ENCODE measurements at regions of chr4 and their contacts with region 1.

Region 1: DNA sequence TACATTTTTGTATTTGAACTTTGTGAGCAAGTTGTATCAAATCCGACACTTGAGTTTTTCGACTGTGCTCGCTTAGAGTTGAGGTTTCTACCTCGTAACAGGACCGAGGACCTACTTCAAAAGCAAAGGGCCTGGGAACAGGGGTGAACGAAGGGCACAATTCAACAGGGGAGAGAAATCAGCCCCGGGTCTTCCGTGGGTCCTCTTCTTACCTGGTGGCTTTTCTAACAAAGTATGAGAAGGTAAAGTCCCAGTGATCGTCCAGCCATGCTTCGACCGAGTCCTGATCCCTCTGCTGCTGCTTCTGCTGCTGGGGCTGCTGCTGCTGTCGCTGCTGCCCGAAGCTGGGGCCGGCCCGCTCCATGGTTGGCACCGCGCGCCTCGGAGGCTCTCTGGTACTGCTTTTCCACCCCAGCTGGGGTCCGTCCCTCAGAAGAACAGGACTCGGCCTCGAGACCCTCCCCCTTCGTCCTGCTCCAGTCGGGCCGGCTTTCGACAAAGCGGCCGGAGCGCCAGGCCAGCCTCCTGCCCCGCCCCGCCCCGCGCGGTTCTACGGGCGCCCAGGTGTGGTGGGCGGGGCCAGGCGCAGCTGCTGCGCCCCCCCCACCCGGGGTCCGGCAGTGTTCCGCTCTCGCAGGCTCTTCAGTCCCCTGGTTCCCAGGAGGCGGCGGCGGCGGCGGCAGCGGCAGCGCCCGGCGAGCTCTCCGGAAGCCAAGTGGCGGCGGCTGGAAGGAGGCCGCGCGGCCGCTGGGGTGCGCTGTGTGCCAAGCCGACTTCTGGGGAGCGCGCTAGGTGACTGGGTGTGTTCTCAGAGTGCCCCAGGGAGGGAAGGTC is at the start of gene PDE5A:
- DNase-seq: peak; percentile 82 to 91
- H3K4me3 ChIP-seq: peak within 1 kb of the TSS; percentile 69
- H3K4me3 Mint-ChIP-seq: peak within 1 kb of the TSS; percentile 90
- H3K27ac Mint-ChIP-seq: peak within 1 kb of the TSS; percentile 70
- H3K4me1 ChIP-seq: no peaks in the 10 kb centered on the region; the same call in 1 of the 2 replicates
- H3K4me1 Mint-ChIP-seq: peaks cover 5% of the 10 kb centered on the region
- H3K27me3 ChIP-seq: no peaks in the 10 kb centered on the region
- H3K27me3 Mint-ChIP-seq: no peaks in the 10 kb centered on the region
- CTCF ChIP-seq: peak; percentile 58 to 80
- total RNA-seq, gene PDE5A: 7.9 and 10.8 TPM in 2 replicates

Region 2: DNA sequence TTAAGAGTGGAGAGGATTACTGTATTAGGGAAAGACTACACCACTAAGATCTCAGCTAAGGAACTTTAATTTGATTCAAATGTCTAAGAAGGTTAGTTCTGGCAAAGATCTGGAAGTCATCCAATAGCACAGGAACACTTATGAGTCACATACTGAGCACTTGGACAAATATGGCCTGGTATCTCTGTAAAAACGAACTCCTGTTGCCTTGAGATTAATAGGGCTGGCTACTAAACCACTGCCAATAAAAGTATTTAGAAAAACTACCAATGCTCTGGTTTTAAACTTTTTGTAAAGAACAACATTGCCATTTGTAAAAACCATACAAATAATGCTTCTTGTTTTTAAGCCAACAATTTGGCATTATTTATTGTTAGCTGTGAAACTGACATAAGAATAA is 863.1 kb before region 1 on chr4:
- CTCF ChIA-PET with region 1: no interaction called
- POLR2A ChIA-PET with region 1: no interaction called
- intact Hi-C with region 1: no loop called
- DNase-seq: no peak
- H3K4me3 ChIP-seq: no peak overlapping the region
- H3K4me3 Mint-ChIP-seq: no peak overlapping the region
- H3K27ac Mint-ChIP-seq: no peak overlapping the region
- H3K4me1 ChIP-seq: no peaks in the 10 kb centered on the region
- H3K4me1 Mint-ChIP-seq: no peaks in the 10 kb centered on the region
- H3K27me3 ChIP-seq: no peaks in the 10 kb centered on the region
- H3K27me3 Mint-ChIP-seq: no peaks in the 10 kb centered on the region
- CTCF ChIP-seq: no peak

Region 3: DNA sequence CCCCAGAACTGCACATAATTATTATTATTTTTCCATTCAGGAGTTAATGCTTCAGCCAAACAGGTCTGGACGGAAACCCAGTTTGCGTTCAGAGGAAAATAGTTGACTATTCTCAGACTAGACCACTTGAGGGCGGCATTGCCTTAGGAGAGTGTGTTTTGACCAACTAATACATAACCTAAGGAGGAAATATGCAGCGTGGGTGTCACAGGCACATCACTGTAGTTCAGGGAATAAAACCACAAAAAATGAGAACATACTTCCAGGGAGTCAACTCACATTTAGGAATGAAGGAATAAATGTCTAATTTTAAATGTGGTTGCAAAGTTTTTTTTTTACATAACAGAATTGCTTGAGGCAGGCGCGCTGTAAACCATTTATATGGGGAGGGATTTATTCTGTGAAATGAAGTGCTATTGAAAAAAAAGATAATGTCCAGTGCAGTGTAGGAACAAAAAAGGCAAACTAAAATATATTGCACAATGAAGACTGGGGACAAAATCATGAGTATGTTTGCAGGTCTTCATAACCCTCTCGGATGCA is 646.6 kb before region 1 on chr4:
- CTCF ChIA-PET with region 1: no interaction called
- POLR2A ChIA-PET with region 1: no interaction called
- intact Hi-C with region 1: loop called (anchors 1 kb)
- DNase-seq: peak; percentile 52 to 70
- H3K4me3 ChIP-seq: no peak overlapping the region
- H3K4me3 Mint-ChIP-seq: no peak overlapping the region
- H3K27ac Mint-ChIP-seq: no peak overlapping the region
- H3K4me1 ChIP-seq: no peaks in the 10 kb centered on the region
- H3K4me1 Mint-ChIP-seq: no peaks in the 10 kb centered on the region
- H3K27me3 ChIP-seq: no peaks in the 10 kb centered on the region
- H3K27me3 Mint-ChIP-seq: no peaks in the 10 kb centered on the region
- CTCF ChIP-seq: peak; percentile 62 to 75

Region 4: DNA sequence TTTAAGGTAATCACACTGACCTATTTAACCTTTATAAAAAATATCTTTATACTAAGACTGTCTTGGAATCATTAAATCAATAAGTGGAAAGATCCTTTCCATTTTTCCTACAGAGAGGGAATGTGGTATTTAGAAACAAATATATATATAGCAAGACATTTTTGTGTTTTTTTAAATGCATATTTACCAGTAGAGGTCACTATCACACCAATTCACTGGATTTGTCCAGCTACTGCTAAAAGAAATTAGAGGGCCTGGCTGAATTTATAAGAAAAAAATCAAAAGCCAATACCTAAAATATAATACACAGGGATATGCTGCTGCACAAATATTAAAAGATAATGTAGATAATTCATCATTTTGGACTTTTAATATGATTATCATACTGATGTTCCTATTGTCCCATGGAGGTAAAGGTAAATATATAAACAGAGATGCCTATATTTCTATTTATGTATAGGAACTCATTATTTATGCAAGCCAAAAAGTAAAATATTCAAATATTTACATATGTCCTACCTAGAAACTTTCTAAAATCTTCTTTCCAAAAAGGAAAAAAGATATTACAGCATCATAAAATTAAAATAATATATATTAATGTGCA is 69.4 kb before region 1 on chr4:
- CTCF ChIA-PET with region 1: interaction called, 18 read pairs
- POLR2A ChIA-PET with region 1: no interaction called
- intact Hi-C with region 1: loop called (anchors 1 kb)
- DNase-seq: peak in 1 of 2 experiments; percentile 16
- H3K4me3 ChIP-seq: no peak overlapping the region
- H3K4me3 Mint-ChIP-seq: no peak overlapping the region
- H3K27ac Mint-ChIP-seq: no peak overlapping the region
- H3K4me1 ChIP-seq: no peaks in the 10 kb centered on the region
- H3K4me1 Mint-ChIP-seq: no peaks in the 10 kb centered on the region
- H3K27me3 ChIP-seq: no peaks in the 10 kb centered on the region
- H3K27me3 Mint-ChIP-seq: no peaks in the 10 kb centered on the region
- CTCF ChIP-seq: peak; percentile 29 to 38

Region 5: GRCh38 chr4:119707336-119707735 is 78.8 kb after region 1 on chr4:
- CTCF ChIA-PET with region 1: interaction called, 3 read pairs
- POLR2A ChIA-PET with region 1: no interaction called
- intact Hi-C with region 1: loop called (anchors 2 kb)
- DNase-seq: peak in 1 of 2 experiments; percentile 46
- H3K4me3 ChIP-seq: no peak overlapping the region
- H3K4me3 Mint-ChIP-seq: no peak overlapping the region
- H3K27ac Mint-ChIP-seq: peak overlapping the region; percentile 57
- H3K4me1 ChIP-seq: peaks cover 17% of the 10 kb centered on the region
- H3K4me1 Mint-ChIP-seq: peaks cover 10% of the 10 kb centered on the region
- H3K27me3 ChIP-seq: no peaks in the 10 kb centered on the region
- H3K27me3 Mint-ChIP-seq: no peaks in the 10 kb centered on the region
- CTCF ChIP-seq: no peak

Region 6: GRCh38 chr4:119728692-119729593 is 100.4 kb after region 1 on chr4:
- CTCF ChIA-PET with region 1: no interaction called
- POLR2A ChIA-PET with region 1: no interaction called
- intact Hi-C with region 1: no loop called
- DNase-seq: no peak
- H3K4me3 ChIP-seq: no peak overlapping the region
- H3K4me3 Mint-ChIP-seq: no peak overlapping the region
- H3K27ac Mint-ChIP-seq: no peak overlapping the region
- H3K4me1 ChIP-seq: peaks cover 14% of the 10 kb centered on the region
- H3K4me1 Mint-ChIP-seq: peaks cover 21% of the 10 kb centered on the region
- H3K27me3 ChIP-seq: no peaks in the 10 kb centered on the region
- H3K27me3 Mint-ChIP-seq: no peaks in the 10 kb centered on the region
- CTCF ChIP-seq: no peak

Region 7: GRCh38 chr4:119872371-119873031 is 244.0 kb after region 1 on chr4:
- CTCF ChIA-PET with region 1: interaction called, 4 read pairs
- POLR2A ChIA-PET with region 1: no interaction called
- intact Hi-C with region 1: loop called (anchors 5 kb)
- DNase-seq: no peak
- H3K4me3 ChIP-seq: no peak overlapping the region
- H3K4me3 Mint-ChIP-seq: no peak overlapping the region
- H3K27ac Mint-ChIP-seq: no peak overlapping the region
- H3K4me1 ChIP-seq: no peaks in the 10 kb centered on the region
- H3K4me1 Mint-ChIP-seq: peaks cover 11% of the 10 kb centered on the region
- H3K27me3 ChIP-seq: no peaks in the 10 kb centered on the region
- H3K27me3 Mint-ChIP-seq: peaks cover 2% of the 10 kb centered on the region
- CTCF ChIP-seq: no peak